Activated CD4-positive, alpha-beta T cell treated with anti-CD3 and anti-CD28 coated beads for 36 hours (primary cell): ENCODE measurements at regions of chr22 and their contacts with region 1.

Region 1: DNA sequence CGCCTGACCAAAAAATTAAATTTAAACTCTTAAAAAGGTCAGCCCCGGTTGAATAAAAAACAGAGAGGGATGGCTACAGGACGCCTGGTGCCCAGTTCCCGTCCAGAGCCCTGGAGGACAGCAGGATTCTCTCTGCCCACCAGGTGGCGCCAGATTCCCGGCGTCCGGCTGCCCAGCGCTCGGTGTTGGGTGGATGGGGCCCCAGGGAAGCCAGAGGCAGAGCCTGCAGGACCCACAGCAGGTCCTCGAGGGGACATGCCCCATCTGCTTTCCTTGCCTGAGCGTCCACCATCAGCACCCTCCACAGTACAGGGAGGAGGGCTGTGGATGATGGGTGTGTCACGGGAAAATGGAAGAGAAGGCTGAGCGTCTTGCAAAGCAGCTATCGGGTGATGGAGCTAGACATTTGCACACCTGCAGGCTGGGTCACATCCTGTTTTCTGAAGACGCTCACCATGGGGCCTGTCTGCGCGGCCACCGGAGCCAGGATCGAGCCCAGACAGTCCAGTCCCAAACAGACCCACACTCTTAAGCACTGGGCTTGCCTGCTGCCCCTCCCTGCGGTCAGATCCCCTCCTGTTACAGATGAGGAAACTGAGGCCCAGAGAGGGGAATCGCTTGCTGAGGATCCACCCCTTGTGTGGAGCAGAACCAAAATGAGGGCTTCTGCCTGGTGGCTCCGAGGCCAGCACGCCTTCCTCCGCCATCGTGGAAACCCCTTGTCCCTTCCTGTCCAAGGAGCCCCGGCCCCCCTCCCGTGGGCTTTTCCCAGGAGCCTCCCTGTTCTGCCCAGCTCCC is 18.5 kb upstream of the CBX7 start:
- DNase-seq: peak; percentile 92
- ATAC-seq: peak; percentile 83
- H3K4me3 Mint-ChIP-seq: no peak overlapping the region
- H3K27ac Mint-ChIP-seq: no peak overlapping the region
- H3K4me1 Mint-ChIP-seq: peaks cover 42% of the 10 kb centered on the region
- H3K27me3 Mint-ChIP-seq: no peaks in the 10 kb centered on the region

Region 2: DNA sequence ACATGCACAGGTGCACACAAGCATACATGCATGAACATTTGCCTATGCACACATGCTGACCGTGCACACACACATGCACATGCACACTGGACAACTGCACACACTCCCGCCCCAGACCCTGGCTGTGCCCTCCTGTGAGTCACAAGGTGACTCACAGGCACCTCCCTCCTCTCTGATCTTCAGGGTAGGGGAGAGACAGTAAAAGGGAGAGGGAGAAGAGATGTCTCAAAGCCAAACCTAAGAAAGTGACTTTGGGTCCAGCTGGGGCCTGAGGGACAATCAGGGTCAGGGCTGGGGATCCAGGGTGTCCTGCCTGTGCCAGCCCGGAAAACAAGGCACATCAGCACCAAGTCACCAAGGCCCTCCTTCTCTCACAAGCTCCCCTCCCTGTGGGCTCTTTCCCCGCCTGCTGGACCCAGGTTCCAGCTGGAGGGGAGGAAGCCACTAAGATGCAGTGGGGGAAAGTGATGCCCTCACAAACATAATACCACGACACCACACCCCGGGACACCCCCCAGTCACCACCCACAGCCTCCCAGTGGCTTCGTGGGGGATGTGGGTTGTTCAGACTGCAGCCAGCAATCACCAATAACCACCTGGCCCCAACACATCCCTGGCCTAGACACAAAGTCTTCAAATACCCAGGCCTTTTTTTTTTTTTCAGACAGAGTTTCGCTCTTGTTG is 34.5 kb after region 1 on chr22:
- CTCF ChIA-PET with region 1: interaction called, 3 read pairs
- POLR2A ChIA-PET with region 1: interaction called, 3 read pairs
- intact Hi-C with region 1: loop called in 1 of 2 experiments (anchors 2 kb)
- DNase-seq: peak; percentile 58
- ATAC-seq: peak; percentile 96
- H3K4me3 Mint-ChIP-seq: no peak overlapping the region
- H3K27ac Mint-ChIP-seq: no peak overlapping the region
- H3K4me1 Mint-ChIP-seq: peaks cover 26% of the 10 kb centered on the region
- H3K27me3 Mint-ChIP-seq: peaks cover 2% of the 10 kb centered on the region

Region 3: GRCh38 chr22:39224581-39225365 is 53.7 kb after region 1 on chr22:
- CTCF ChIA-PET with region 1: interaction called, 3 read pairs
- POLR2A ChIA-PET with region 1: interaction called, 5 read pairs
- intact Hi-C with region 1: loop called in 1 of 2 experiments (anchors 5 kb)
- DNase-seq: no peak
- ATAC-seq: peak; percentile 26
- H3K4me3 Mint-ChIP-seq: no peak overlapping the region
- H3K27ac Mint-ChIP-seq: no peak overlapping the region
- H3K4me1 Mint-ChIP-seq: peaks cover 5% of the 10 kb centered on the region
- H3K27me3 Mint-ChIP-seq: peaks cover 2% of the 10 kb centered on the region

Region 4: DNA sequence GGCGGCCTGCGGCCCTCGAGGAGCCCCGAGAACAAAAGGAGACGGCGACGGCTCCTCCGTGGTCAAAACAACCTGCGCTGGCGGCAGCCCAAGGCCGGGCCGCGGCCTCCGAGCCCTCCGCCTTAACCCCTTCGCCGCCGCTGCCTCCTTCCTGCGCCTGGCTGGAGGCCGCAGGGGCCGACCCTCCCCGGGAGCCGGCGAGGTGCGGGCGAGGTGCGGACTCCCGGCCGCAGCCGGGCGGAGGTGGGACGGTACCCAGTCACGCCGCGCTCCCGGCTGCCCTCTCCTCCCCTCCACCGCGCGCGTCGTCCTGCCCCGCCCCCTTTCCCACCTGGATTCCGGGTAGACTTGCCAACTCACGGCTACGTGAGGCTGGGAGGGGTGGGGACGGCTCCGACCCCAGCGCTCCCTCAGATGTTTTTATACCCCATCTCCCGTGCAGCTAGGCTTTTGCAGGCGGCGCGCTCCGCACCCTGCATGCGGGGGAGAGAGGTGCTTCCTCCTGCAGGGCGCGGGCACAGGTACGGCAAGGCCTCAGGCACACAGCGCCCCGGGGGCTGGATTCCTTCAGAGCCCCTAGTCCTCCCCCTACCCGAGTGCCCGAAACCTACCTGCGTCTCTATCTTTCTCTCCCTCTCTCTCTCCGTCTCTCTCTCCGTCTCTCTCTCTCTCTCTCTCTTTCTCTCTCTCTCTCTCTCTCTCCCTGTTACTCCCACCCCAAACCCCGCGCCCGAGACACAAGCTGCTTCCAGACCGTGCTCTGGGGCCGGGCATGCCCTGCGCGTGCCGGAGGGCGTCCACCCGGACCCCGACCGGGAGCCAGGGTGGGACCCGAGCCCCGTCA is 71.8 kb after region 1 on chr22:
- CTCF ChIA-PET with region 1: no interaction called
- POLR2A ChIA-PET with region 1: no interaction called
- intact Hi-C with region 1: loop called in 1 of 2 experiments (anchors 2 kb)
- DNase-seq: peak; percentile 63
- ATAC-seq: peak; percentile 13
- H3K4me3 Mint-ChIP-seq: peak overlapping the region; percentile 68
- H3K27ac Mint-ChIP-seq: no peak overlapping the region
- H3K4me1 Mint-ChIP-seq: peaks cover 43% of the 10 kb centered on the region
- H3K27me3 Mint-ChIP-seq: peaks cover 23% of the 10 kb centered on the region

Region 5: DNA sequence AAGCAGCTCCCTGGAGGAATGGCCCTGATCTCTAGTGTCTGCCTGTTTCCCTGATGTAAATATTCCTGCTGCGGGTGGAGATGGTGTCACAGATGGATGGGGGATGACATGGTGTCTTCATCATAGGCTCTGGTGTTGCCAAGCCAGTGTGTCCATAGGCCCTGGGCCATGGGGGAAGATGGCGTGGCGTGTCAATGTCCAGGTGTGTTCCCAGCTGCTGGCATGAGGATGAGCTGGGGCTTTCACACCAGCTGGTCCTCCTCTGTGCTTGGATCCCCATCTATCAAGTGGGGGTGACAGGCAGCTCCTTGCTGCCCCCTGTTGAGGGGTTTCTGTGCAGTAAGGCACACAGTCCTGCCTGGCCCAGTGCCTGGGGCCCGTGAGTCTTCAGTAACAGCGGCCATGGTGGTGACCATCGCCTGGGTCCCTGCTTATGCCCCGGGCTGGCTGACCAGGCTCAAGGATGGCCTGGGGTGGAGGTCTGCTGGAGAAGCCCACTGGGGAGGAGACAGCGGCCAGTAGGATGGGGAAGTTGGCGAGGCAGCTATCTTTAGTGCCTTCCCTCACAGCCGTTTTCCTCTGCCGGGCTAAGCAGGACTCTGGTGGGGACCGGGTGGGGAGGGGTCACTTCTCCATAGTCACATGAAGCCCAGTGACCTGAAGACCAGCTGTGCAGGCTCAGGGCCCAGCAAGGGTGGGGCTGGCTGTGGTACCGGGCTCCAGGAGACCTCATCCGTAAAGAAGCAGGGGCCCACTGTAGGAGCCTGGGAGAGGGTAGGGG is 135.7 kb after region 1 on chr22:
- CTCF ChIA-PET with region 1: interaction called, 70 read pairs
- POLR2A ChIA-PET with region 1: interaction called, 13 read pairs
- intact Hi-C with region 1: loop called (anchors 1 kb)
- DNase-seq: peak; percentile 79
- ATAC-seq: peak; percentile 60
- H3K4me3 Mint-ChIP-seq: no peak overlapping the region
- H3K27ac Mint-ChIP-seq: no peak overlapping the region
- H3K4me1 Mint-ChIP-seq: peaks cover 2% of the 10 kb centered on the region
- H3K27me3 Mint-ChIP-seq: no peaks in the 10 kb centered on the region

Region 6: GRCh38 chr22:39332441-39333064 is 161.5 kb after region 1 on chr22:
- CTCF ChIA-PET with region 1: interaction called, 10 read pairs
- POLR2A ChIA-PET with region 1: no interaction called
- intact Hi-C with region 1: no loop called
- DNase-seq: no peak
- ATAC-seq: peak; percentile 74
- H3K4me3 Mint-ChIP-seq: no peak overlapping the region
- H3K27ac Mint-ChIP-seq: peak overlapping the region; percentile 3
- H3K4me1 Mint-ChIP-seq: peaks cover 15% of the 10 kb centered on the region
- H3K27me3 Mint-ChIP-seq: no peaks in the 10 kb centered on the region